Gastrocnemius medialis (tissue), 4 donors: ENCODE measurements at regions of chr5 and their contacts with region 1.

Region 1: GRCh38 chr5:75236322-75237316 is at the start of gene ANKRD31:
- DNase-seq: peak; percentile 39 to 57
- ATAC-seq: peak; percentile 90 to 91
- H3K4me3 ChIP-seq: peak within 1 kb of the TSS; percentile 55 to 83 (median 76)
- H3K27ac ChIP-seq: peak within 1 kb of the TSS; percentile 41 to 56 (median 51)
- H3K4me1 ChIP-seq: peaks cover 5 to 6% of the 10 kb centered on the region in 2 donors
- H3K27me3 ChIP-seq: no peaks in the 10 kb centered on the region
- CTCF ChIP-seq: peak; percentile 61 to 85 (median 80)
- POLR2A ChIP-seq: no peak
- total RNA-seq, gene ANKRD31: 0.03 TPM in 1 of 4 donors, not detected in the others

Region 2: GRCh38 chr5:75053304-75054133 is 183.1 kb before region 1 on chr5:
- in situ Hi-C with region 1: no loop called
- intact Hi-C with region 1: loop called (anchors 1 kb)
- DNase-seq: peak; percentile 11 to 54
- ATAC-seq: peak; percentile 58 to 65
- H3K4me3 ChIP-seq: peak overlapping the region; percentile 74 to 86 (median 77)
- H3K27ac ChIP-seq: peak overlapping the region; percentile 75 to 87 (median 86)
- H3K4me1 ChIP-seq: peaks cover 11 to 15% of the 10 kb centered on the region in 2 donors
- H3K27me3 ChIP-seq: no peaks in the 10 kb centered on the region
- CTCF ChIP-seq: no peak
- POLR2A ChIP-seq: peak; percentile 41 to 50

Region 3: GRCh38 chr5:75668977-75669689 is 432.5 kb after region 1 on chr5:
- in situ Hi-C with region 1: loop called in 1 of 4 experiments (anchors 25 kb)
- intact Hi-C with region 1: no loop called
- DNase-seq: peak in 1 of 2 donors; percentile 16
- ATAC-seq: peak in 1 of 2 donors; percentile 44
- H3K4me3 ChIP-seq: peak overlapping the region in 1 of 4 donors; percentile 2
- H3K27ac ChIP-seq: no peak overlapping the region
- H3K4me1 ChIP-seq: no peaks in the 10 kb centered on the region
- H3K27me3 ChIP-seq: no peaks in the 10 kb centered on the region
- CTCF ChIP-seq: no peak
- POLR2A ChIP-seq: no peak

Region 4: GRCh38 chr5:75681125-75681830 is 444.7 kb after region 1 on chr5:
- in situ Hi-C with region 1: loop called in 3 of 4 experiments (anchors 10 to 25 kb)
- intact Hi-C with region 1: loop called (anchors 2 kb)
- DNase-seq: no peak
- ATAC-seq: no peak
- H3K4me3 ChIP-seq: no peak overlapping the region
- H3K27ac ChIP-seq: no peak overlapping the region
- H3K4me1 ChIP-seq: peaks cover 0 to 3% of the 10 kb centered on the region in 2 donors
- H3K27me3 ChIP-seq: no peaks in the 10 kb centered on the region
- CTCF ChIP-seq: peak in 4 of 5 experiments; percentile 40 to 77 (median 60)
- POLR2A ChIP-seq: no peak